Ascending aorta (tissue), 2 donors: ENCODE measurements at regions of chr21 and their contacts with region 1.

Region 1: GRCh38 chr21:33266050-33266788 is at the start of gene IL10RB:
- DNase-seq: peak in 1 of 2 donors; percentile 85
- H3K4me3 ChIP-seq: peak within 1 kb of the TSS; percentile 76 to 89
- H3K27ac ChIP-seq: peak within 1 kb of the TSS; percentile 84
- H3K4me1 ChIP-seq: peaks cover 0 to 10% of the 10 kb centered on the region in 2 donors
- H3K27me3 ChIP-seq: no peaks in the 10 kb centered on the region
- CTCF ChIP-seq: no peak
- total RNA-seq, gene IL10RB: 39.1 TPM

Region 2: GRCh38 chr21:32770871-32771523 is 495.2 kb before region 1 on chr21:
- intact Hi-C with region 1: loop called (anchors 10 kb)
- DNase-seq: peak in 1 of 2 donors; percentile 77
- H3K4me3 ChIP-seq: peak overlapping the region; percentile 75 to 93
- H3K27ac ChIP-seq: peak overlapping the region; percentile 77 to 93
- H3K4me1 ChIP-seq: peaks cover 3 to 19% of the 10 kb centered on the region in 2 donors
- H3K27me3 ChIP-seq: no peaks in the 10 kb centered on the region
- CTCF ChIP-seq: peak in 1 of 3 experiments; percentile 5

Region 3: GRCh38 chr21:33229784-33230544 is 36.3 kb before region 1 on chr21 and contains the start of gene IFNAR2:
- intact Hi-C with region 1: loop called (anchors 1 kb)
- DNase-seq: peak in 1 of 2 donors; percentile 86
- H3K4me3 ChIP-seq: peak within 1 kb of the TSS; percentile 95 to 100
- H3K27ac ChIP-seq: peak within 1 kb of the TSS; percentile 99
- H3K4me1 ChIP-seq: peaks cover 0 to 23% of the 10 kb centered on the region in 2 donors
- H3K27me3 ChIP-seq: no peaks in the 10 kb centered on the region
- CTCF ChIP-seq: no peak
- total RNA-seq, gene IFNAR2: 30.3 TPM

Region 4: DNA sequence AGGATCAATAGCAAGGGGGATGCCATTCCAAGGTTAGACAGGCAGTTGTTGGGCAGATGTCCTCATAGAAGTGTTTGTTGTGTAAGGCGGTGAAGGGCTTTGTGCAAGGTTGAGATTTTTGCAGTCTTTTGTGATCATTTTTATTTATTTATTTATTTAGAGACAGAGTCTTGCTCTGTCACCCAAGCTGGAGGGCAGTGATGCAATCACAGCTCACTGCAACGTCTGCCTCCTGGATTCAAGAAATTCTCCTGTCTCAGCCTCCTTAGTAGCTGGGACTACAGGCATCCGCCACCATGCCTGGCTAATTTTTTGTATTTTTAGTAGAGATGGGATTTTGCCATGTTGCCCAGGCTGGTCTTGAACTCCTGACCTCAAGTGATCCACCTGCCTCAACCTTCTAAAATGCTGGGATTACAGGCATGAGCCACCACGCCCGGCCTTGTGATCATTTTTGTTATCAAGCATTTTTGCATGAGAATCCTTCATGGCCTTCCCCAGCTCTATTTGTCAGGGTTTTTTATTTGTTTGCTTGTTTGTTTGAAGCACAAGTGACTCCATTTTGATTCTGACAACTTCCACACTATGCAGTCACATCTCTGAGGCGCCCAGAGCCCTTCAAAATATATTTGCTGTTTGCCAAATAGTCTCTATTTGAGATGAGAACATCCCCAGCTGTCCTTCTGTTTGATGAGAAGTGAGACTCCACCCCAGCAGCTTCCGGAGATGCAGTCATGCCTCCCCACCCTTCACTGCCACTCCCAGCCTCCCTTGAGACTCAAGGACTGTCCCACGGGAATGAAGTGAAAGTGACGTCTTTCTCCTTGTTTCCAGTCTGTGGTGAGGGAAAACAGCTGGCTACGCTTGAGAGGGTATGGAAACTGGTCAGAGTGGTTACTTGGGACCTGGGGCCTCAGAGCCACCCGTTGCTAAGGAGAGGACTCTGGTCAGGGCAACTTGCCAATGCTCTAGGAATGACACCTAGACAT is 175.6 kb after region 1 on chr21:
- intact Hi-C with region 1: loop called (anchors 5 kb)
- DNase-seq: peak in 1 of 2 donors; percentile 70
- H3K4me3 ChIP-seq: no peak overlapping the region
- H3K27ac ChIP-seq: peak overlapping the region; percentile 14 to 37
- H3K4me1 ChIP-seq: peaks cover 0 to 7% of the 10 kb centered on the region in 2 donors
- H3K27me3 ChIP-seq: no peaks in the 10 kb centered on the region
- CTCF ChIP-seq: no peak